ENCODE measurements at regions of chr14 and their contacts with region 1.

Region 1: DNA sequence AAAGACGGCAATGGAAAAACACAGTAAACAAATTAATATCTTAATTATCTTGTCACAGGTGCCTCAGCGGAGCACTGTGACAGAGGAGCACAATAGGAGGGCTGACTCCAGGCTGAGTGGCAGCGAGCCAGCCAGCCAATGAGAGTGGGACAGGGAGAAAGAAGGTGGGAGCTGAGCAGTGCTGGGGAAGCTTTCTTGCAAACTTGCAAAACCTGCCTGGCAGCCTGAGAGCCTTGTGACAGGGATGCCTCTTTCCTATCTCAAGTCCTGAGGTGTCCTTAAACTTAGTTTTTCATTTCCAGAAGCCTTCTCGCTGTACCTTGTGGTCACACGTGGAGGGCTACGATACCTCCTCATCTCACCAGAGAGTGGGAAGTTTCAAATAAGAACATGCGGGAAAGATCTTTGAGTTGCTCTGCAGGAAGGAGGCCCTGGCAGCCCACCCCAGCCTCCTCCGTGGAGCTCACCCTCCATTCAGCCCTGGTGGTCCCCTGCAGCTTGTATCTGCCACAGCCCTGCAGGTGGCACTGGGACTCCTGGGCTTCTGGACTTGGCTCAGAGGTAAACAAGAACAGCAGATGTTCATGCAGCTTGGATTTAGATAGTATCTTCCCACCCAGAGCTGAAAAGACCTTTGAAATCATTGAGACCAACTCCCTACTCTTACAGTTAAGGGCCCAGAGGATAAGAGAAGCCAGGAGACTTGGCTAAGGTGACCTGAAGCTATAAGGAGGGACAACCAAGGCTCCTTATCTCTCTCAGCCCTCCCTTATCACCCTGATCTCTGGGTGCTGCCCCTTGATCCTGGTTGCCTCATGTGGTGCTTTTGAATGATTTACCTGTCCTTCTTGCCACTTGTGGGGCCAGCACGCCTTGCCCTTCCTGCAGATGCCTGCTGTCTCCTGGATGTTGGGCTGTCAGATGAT is 153.5 kb upstream of the MAX start:
- DNase-seq: no peak
- H3K4me3 ChIP-seq: no peak overlapping the region
- H3K27ac ChIP-seq: no peak overlapping the region
- H3K4me1 ChIP-seq: peaks cover 31% of the 10 kb centered on the region
- H3K27me3 ChIP-seq: no peaks in the 10 kb centered on the region
- CTCF ChIP-seq: no peak
- POLR2A ChIP-seq: no peak

Region 2: GRCh38 chr14:65102441-65103149 is 153.2 kb before region 1 on chr14 and contains the start of gene MAX:
- CTCF ChIA-PET with region 1: no interaction called
- POLR2A ChIA-PET with region 1: no interaction called
- dilution Hi-C with region 1: no loop called
- intact Hi-C with region 1: loop called (anchors 5 kb)
- DNase-seq: peak; percentile 99
- H3K4me3 ChIP-seq: peak within 1 kb of the TSS; percentile 87 to 93 (median 91)
- H3K27ac ChIP-seq: peak within 1 kb of the TSS; percentile 74
- H3K4me1 ChIP-seq: peaks cover 35% of the 10 kb centered on the region
- H3K27me3 ChIP-seq: no peaks in the 10 kb centered on the region
- CTCF ChIP-seq: no peak
- POLR2A ChIP-seq: peak; percentile 65
- total RNA-seq, gene MAX: 79.5 and 84.6 TPM in 2 replicates

Region 3: GRCh38 chr14:65229751-65230749 is 25.7 kb before region 1 on chr14:
- CTCF ChIA-PET with region 1: interaction called, 4 read pairs
- POLR2A ChIA-PET with region 1: no interaction called
- dilution Hi-C with region 1: no loop called
- intact Hi-C with region 1: loop called (anchors 2 kb)
- DNase-seq: peak; percentile 75
- H3K4me3 ChIP-seq: peak overlapping the region; percentile 14 to 65 (median 23)
- H3K27ac ChIP-seq: peak overlapping the region; percentile 70
- H3K4me1 ChIP-seq: peaks cover 17% of the 10 kb centered on the region
- H3K27me3 ChIP-seq: no peaks in the 10 kb centered on the region
- CTCF ChIP-seq: no peak
- POLR2A ChIP-seq: no peak

Region 4: GRCh38 chr14:65243766-65244442 is 11.9 kb before region 1 on chr14:
- CTCF ChIA-PET with region 1: interaction called, 4 read pairs
- POLR2A ChIA-PET with region 1: no interaction called
- dilution Hi-C with region 1: no loop called
- intact Hi-C with region 1: loop called (anchors 2 kb)
- DNase-seq: peak; percentile 93
- H3K4me3 ChIP-seq: peak overlapping the region in 1 of 3 experiments; percentile 16
- H3K27ac ChIP-seq: peak overlapping the region; percentile 85
- H3K4me1 ChIP-seq: peaks cover 47% of the 10 kb centered on the region
- H3K27me3 ChIP-seq: no peaks in the 10 kb centered on the region
- CTCF ChIP-seq: no peak
- POLR2A ChIP-seq: peak; percentile 88

Measured in endothelial cell of umbilical vein (primary cell).